Caco-2 (cell line): ENCODE measurements at regions of chr20 and their contacts with region 1.

Region 1: GRCh38 chr20:13261460-13262301 is 40.6 kb downstream of the ISM1 start:
- DNase-seq: peak; percentile 76 to 83
- H3K4me3 ChIP-seq: no peak overlapping the region
- H3K4me3 Mint-ChIP-seq: no peak overlapping the region
- H3K27ac Mint-ChIP-seq: peak overlapping the region; percentile 69
- H3K4me1 ChIP-seq: peaks cover 23% of the 10 kb centered on the region
- H3K4me1 Mint-ChIP-seq: peaks cover 18% of the 10 kb centered on the region
- H3K27me3 ChIP-seq: no peaks in the 10 kb centered on the region
- H3K27me3 Mint-ChIP-seq: no peaks in the 10 kb centered on the region
- CTCF ChIP-seq: peak; percentile 74 to 76

Region 2: DNA sequence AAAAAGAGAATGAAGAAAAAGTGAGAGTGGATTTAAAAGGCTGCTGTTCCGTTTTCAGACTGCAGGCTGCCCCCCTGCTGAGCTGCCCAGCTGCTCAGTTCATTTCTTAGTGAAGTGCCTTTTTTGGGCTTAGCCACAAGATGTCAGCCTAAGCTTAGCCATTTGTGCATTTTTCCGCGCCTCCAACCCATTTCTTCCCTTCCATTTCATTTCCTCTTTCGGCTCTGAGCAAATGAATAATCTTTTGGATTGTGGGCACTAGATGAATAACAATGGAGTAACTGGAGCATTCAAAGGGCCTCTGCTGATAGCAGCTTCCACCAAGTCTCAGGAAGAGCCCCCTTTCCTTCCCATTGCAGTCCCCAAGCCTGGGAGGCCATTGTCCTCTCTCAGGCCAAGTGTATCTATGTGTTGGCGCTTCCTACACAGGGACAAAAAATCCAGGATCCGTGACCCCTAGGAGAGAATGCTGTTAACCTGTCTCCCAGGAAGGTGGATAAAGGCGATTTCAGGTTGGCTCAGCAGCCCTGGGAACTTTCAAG is 336.4 kb before region 1 on chr20:
- CTCF ChIA-PET with region 1: interaction called, 3 read pairs
- POLR2A ChIA-PET with region 1: no interaction called
- intact Hi-C with region 1: loop called (anchors 1 kb)
- DNase-seq: peak; percentile 79
- H3K4me3 ChIP-seq: no peak overlapping the region
- H3K4me3 Mint-ChIP-seq: peak overlapping the region; percentile 43
- H3K27ac Mint-ChIP-seq: no peak overlapping the region
- H3K4me1 ChIP-seq: peaks cover 27% of the 10 kb centered on the region
- H3K4me1 Mint-ChIP-seq: peaks cover 23% of the 10 kb centered on the region
- H3K27me3 ChIP-seq: no peaks in the 10 kb centered on the region
- H3K27me3 Mint-ChIP-seq: no peaks in the 10 kb centered on the region
- CTCF ChIP-seq: peak; percentile 93 to 97

Region 3: DNA sequence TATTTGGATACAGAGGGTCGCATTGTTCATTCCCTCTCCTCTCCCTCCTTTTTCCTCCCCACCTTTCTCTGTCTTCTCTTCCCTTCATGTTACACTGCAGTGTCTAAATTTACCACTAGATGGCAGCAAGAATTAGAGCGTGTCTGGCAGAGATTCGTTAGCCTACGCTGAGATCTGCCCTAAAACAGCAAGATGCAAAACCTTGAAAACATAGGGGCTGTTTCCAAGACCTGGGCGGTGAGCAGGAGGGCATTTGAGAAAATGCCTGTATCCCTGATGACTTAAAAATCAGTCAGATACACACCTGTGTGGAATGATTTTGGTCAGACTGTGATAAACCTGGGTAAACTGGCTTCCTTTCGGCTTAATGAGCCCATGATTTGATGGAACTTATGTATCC is 142.1 kb before region 1 on chr20:
- CTCF ChIA-PET with region 1: interaction called, 6 read pairs
- POLR2A ChIA-PET with region 1: no interaction called
- intact Hi-C with region 1: loop called (anchors 1 kb)
- DNase-seq: peak; percentile 52 to 80
- H3K4me3 ChIP-seq: no peak overlapping the region
- H3K4me3 Mint-ChIP-seq: no peak overlapping the region
- H3K27ac Mint-ChIP-seq: no peak overlapping the region
- H3K4me1 ChIP-seq: peaks cover 4% of the 10 kb centered on the region; the same call in 1 of the 2 replicates
- H3K4me1 Mint-ChIP-seq: no peaks in the 10 kb centered on the region
- H3K27me3 ChIP-seq: no peaks in the 10 kb centered on the region
- H3K27me3 Mint-ChIP-seq: no peaks in the 10 kb centered on the region
- CTCF ChIP-seq: peak; percentile 77 to 89

Region 4: DNA sequence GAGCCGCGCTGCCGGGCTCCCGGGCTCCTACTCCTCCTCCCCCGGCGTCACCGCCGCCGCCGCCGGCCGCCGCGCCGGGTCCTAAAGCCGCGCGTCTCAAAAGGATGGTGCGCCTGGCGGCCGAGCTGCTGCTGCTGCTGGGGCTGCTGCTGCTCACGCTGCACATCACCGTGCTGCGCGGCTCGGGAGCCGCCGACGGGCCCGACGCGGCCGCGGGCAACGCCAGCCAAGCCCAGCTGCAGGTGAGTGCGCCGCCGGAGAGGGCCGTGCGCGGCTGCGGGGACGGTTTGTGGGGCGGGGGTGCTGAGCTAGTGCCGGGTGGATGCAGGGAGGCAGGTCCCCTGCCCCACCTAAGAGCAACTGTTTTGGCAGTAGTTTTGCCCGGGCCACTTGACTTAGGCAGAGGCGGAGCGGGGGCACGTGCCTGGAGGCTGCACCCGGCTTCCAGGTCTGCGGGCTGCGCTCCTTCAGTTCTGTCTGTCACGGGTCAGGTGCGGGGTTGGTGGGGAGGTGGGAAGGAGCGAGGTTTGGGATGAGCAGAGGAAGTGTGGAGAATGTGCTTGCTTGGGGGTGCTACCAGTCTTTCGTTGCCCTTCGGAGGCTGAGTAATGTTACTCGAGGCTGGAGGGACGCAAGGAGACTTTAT is 39.9 kb before region 1 on chr20:
- CTCF ChIA-PET with region 1: interaction called, 6 read pairs
- POLR2A ChIA-PET with region 1: no interaction called
- intact Hi-C with region 1: loop called (anchors 1 kb)
- DNase-seq: peak; percentile 65 to 77
- H3K4me3 ChIP-seq: peak overlapping the region; percentile 54
- H3K4me3 Mint-ChIP-seq: peak overlapping the region; percentile 69
- H3K27ac Mint-ChIP-seq: no peak overlapping the region
- H3K4me1 ChIP-seq: peaks cover 10% of the 10 kb centered on the region
- H3K4me1 Mint-ChIP-seq: no peaks in the 10 kb centered on the region
- H3K27me3 ChIP-seq: no peaks in the 10 kb centered on the region; the same call in 1 of the 2 replicates
- H3K27me3 Mint-ChIP-seq: peaks cover 10% of the 10 kb centered on the region
- CTCF ChIP-seq: no peak

Region 5: GRCh38 chr20:13294522-13294921 is 32.8 kb after region 1 on chr20:
- CTCF ChIA-PET with region 1: no interaction called
- POLR2A ChIA-PET with region 1: no interaction called
- intact Hi-C with region 1: loop called (anchors 2 kb)
- DNase-seq: no peak
- H3K4me3 ChIP-seq: no peak overlapping the region
- H3K4me3 Mint-ChIP-seq: no peak overlapping the region
- H3K27ac Mint-ChIP-seq: no peak overlapping the region
- H3K4me1 ChIP-seq: peaks cover 28% of the 10 kb centered on the region
- H3K4me1 Mint-ChIP-seq: peaks cover 6% of the 10 kb centered on the region
- H3K27me3 ChIP-seq: no peaks in the 10 kb centered on the region
- H3K27me3 Mint-ChIP-seq: no peaks in the 10 kb centered on the region
- CTCF ChIP-seq: no peak

Region 6: DNA sequence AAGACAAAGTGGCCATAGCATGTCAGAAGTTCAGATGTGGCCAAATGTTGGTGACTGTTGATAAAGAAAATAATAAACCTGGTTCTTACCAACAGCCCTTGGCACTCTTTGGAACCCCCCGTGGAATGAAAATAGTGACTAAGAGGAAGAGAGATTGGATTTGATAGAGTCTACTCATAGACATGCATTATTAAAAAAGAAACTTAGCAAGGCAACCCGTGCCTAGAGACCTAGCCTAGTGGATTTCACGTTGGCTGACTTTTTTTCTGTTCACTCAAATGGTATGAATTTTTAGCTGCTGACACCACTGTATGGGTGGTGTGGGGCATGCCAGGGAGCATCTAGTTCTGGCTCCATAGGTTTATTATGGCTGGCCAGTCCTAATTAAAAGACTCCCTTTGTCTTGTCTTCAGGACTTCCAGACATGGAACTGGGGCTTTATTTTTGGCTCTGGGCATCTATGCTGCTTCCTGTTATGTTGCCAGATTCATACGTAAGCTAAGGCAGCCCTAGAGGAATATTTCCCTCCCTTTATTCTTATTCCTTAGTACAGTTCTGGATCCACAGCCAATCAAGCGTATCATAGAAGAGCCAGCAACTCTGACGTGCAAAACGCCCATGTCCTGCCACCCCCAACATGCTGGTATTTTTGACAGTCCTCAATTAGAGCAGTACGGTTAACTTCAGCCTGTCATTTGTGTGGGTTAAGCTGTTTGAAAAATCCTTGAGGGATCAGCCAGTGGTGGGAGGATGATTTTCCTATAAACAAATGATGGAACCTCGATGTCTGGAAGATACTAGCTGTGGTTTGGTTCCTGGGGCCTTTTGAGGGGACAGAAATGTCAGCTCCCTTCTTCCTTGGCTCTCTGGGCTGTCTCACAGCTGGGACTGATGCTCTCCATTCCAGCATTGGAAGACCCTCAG is 86.9 kb after region 1 on chr20:
- CTCF ChIA-PET with region 1: no interaction called
- POLR2A ChIA-PET with region 1: no interaction called
- intact Hi-C with region 1: no loop called
- DNase-seq: no peak
- H3K4me3 ChIP-seq: no peak overlapping the region
- H3K4me3 Mint-ChIP-seq: no peak overlapping the region
- H3K27ac Mint-ChIP-seq: no peak overlapping the region
- H3K4me1 ChIP-seq: no peaks in the 10 kb centered on the region
- H3K4me1 Mint-ChIP-seq: no peaks in the 10 kb centered on the region
- H3K27me3 ChIP-seq: no peaks in the 10 kb centered on the region
- H3K27me3 Mint-ChIP-seq: no peaks in the 10 kb centered on the region
- CTCF ChIP-seq: no peak